OCI-LY7 (cell line): ENCODE measurements at regions of chr4 and their contacts with region 1.

Region 1: GRCh38 chr4:40540801-40541200 is 88.9 kb downstream of the RBM47 start:
- DNase-seq: no peak
- H3K4me3 ChIP-seq: no peak overlapping the region
- H3K27ac ChIP-seq: no peak overlapping the region
- H3K4me1 ChIP-seq: peaks cover 25% of the 10 kb centered on the region
- CTCF ChIP-seq: no peak

Region 2: DNA sequence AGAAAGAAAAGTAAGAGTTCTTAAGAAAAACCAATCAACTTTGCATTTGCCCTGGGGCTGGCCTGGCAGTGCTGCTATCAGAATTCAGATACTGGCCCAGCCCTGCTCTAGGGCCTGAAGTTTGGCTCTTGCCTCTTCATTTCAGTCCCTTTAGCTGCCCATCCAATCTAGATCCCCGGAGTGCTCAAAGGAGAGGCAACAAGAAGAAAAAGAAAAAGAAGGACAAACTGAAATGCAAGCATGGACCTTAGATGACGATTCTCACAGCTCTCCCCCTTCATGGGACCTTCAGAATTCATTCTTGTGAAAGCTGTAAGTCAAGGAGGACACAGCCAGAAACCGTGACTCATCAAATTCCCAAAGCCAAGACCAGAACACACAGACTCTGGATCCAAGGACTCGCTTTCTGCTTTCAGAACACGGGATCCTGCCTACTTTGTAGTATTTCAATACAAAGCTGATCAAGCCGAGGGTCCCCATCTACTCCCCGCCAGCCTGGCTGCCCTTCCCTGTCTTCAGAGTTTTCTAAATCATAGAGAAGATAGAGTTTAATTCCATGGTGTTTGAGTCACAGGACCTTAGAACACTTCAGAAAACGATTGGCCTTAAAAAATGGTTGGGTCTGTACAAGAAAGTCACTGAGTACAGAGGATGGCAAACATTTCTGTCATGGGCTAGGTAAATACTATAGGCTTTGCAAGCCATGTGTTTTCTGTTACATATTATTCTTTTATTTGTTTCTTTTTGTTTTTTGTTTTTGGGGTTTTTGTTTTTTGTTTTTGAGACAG is 14.8 kb before region 1 on chr4:
- CTCF ChIA-PET with region 1: interaction called, 4 read pairs
- POLR2A ChIA-PET with region 1: interaction called, 24 read pairs
- intact Hi-C with region 1: no loop called
- DNase-seq: no peak
- H3K4me3 ChIP-seq: no peak overlapping the region
- H3K27ac ChIP-seq: no peak overlapping the region
- H3K4me1 ChIP-seq: peaks cover 24% of the 10 kb centered on the region
- CTCF ChIP-seq: no peak

Region 3: GRCh38 chr4:40564789-40565490 is 24.1 kb after region 1 on chr4:
- CTCF ChIA-PET with region 1: no interaction called
- POLR2A ChIA-PET with region 1: no interaction called
- intact Hi-C with region 1: no loop called
- DNase-seq: peak; percentile 61
- H3K4me3 ChIP-seq: no peak overlapping the region
- H3K27ac ChIP-seq: peak overlapping the region; percentile 16
- H3K4me1 ChIP-seq: peaks cover 48% of the 10 kb centered on the region
- CTCF ChIP-seq: no peak